Transverse colon (tissue), 4 donors: ENCODE measurements at regions of chr6 and their contacts with region 1.

Region 1: GRCh38 chr6:31396422-31397152 is 6.8 kb upstream of the MICA start:
- DNase-seq: peak; percentile 92
- H3K4me3 ChIP-seq: no peak overlapping the region
- H3K27ac ChIP-seq: peak overlapping the region; percentile 25 to 72 (median 40)
- H3K4me1 ChIP-seq: peaks cover 7 to 42% (median 21%) of the 10 kb centered on the region in 4 donors
- H3K27me3 ChIP-seq: no peaks in the 10 kb centered on the region
- CTCF ChIP-seq: peak; percentile 81 to 92 (median 91)
- EP300 ChIP-seq: no peak
- POLR2A ChIP-seq: no peak

Region 2: GRCh38 chr6:31143148-31143547 is 253.4 kb before region 1 on chr6:
- in situ Hi-C with region 1: no loop called
- intact Hi-C with region 1: no loop called
- DNase-seq: no peak
- H3K4me3 ChIP-seq: no peak overlapping the region
- H3K27ac ChIP-seq: peak overlapping the region; percentile 82 to 91 (median 85)
- H3K4me1 ChIP-seq: peaks cover 0 to 26% (median 20%) of the 10 kb centered on the region in 4 donors
- H3K27me3 ChIP-seq: no peaks in the 10 kb centered on the region
- CTCF ChIP-seq: no peak
- EP300 ChIP-seq: no peak
- POLR2A ChIP-seq: no peak

Region 3: DNA sequence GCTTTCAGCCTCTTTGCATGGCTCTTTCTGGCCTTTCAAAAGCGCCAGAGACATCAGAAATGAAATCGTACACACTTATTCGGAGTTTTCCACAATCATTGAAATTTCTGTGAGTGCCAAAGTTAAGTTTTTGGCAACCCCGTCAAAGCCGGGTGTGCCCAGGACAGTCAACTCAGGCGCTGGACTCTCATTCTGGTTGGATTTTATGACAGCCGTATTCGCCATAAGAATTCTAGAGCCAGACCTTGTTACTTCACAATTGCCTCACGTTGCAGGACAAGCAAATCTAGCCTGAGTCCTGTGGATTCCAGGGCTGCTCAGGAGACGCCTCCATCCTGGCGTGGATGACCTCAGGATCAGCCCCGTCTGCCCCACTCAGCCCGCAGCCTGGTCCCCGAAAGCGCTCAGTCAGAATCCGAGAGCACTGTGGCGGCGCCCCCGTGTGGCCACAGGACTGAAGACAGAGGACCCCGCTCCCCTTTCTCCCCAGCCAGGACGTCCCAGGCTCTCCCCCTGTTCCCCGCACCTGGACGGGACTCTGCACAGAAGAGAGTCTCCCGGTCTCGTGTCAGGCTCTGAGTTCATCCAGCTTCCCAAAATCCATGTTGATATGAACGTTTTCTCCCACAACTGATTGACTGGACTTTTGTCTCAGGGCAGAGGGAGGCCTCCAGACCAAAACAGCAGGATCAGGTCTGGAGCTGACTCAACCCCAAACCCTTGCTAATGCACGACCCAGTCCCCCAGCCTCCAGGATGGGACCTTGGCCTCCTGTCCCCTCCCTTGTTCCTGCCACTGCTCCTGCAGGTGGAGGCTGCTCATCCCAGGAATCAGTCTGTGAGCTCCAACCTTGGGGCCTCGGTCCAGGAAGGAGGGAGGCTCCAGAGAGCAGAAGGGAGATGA is 45.0 kb after region 1 on chr6:
- in situ Hi-C with region 1: loop called in 2 of 4 experiments (anchors 5 kb)
- intact Hi-C with region 1: loop called (anchors 2 kb)
- DNase-seq: peak; percentile 87
- H3K4me3 ChIP-seq: peak overlapping the region in 1 of 4 donors; percentile 15
- H3K27ac ChIP-seq: no peak overlapping the region
- H3K4me1 ChIP-seq: peaks cover 0 to 5% (median 2%) of the 10 kb centered on the region in 4 donors
- H3K27me3 ChIP-seq: peaks cover 38% of the 10 kb centered on the region
- CTCF ChIP-seq: peak; percentile 82 to 87 (median 86)
- EP300 ChIP-seq: no peak
- POLR2A ChIP-seq: no peak

Region 4: GRCh38 chr6:31485055-31485454 is 88.5 kb after region 1 on chr6:
- in situ Hi-C with region 1: loop called in 1 of 4 experiments (anchors 5 kb)
- intact Hi-C with region 1: no loop called
- DNase-seq: no peak
- H3K4me3 ChIP-seq: no peak overlapping the region
- H3K27ac ChIP-seq: no peak overlapping the region
- H3K4me1 ChIP-seq: peaks cover 0 to under 1% (median 0%) of the 10 kb centered on the region in 4 donors
- H3K27me3 ChIP-seq: no peaks in the 10 kb centered on the region
- CTCF ChIP-seq: no peak
- EP300 ChIP-seq: no peak
- POLR2A ChIP-seq: no peak